Activated T-helper 1 cell treated with anti-CD3 and anti-CD28 coated beads, Interleukin-12 subunit alpha, Interleukin-12 subunit beta, Interleukin-2, Interleukin-4 antibody, amounts not matched to agents 30 ng/mL and 10 ng/mL and 1 ng/mL, durations not matched to agents 14 hours and 24 hours and 36 hours (primary cell): ENCODE measurements at regions of chr5 and their contacts with region 1.

Region 1: DNA sequence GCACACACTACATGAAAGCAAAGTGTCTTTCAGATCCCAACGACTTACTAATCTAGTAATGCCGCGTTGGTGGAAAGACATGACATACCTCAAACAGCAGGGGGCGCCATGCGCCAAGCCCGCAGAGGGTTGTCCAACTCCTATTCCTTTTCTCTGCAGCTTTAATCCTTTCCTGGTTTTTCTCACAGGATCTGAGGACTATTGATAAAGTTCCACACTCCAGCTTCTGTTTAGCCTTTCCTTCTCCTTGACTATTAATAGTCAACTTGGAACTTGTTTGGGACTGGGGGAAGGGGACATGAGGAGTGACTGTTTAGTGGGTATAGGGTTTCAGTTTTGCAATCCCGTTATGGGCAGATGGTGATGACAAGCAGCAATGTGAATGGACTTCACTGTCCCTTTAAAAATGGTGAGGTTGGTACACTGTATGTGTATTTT is 62.9 kb downstream of the OTULIN start:
- DNase-seq: peak; percentile 64
- H3K4me3 Mint-ChIP-seq: no peak overlapping the region
- H3K27ac Mint-ChIP-seq: no peak overlapping the region
- H3K4me1 Mint-ChIP-seq: peaks cover 11% of the 10 kb centered on the region
- H3K27me3 Mint-ChIP-seq: no peaks in the 10 kb centered on the region

Region 2: DNA sequence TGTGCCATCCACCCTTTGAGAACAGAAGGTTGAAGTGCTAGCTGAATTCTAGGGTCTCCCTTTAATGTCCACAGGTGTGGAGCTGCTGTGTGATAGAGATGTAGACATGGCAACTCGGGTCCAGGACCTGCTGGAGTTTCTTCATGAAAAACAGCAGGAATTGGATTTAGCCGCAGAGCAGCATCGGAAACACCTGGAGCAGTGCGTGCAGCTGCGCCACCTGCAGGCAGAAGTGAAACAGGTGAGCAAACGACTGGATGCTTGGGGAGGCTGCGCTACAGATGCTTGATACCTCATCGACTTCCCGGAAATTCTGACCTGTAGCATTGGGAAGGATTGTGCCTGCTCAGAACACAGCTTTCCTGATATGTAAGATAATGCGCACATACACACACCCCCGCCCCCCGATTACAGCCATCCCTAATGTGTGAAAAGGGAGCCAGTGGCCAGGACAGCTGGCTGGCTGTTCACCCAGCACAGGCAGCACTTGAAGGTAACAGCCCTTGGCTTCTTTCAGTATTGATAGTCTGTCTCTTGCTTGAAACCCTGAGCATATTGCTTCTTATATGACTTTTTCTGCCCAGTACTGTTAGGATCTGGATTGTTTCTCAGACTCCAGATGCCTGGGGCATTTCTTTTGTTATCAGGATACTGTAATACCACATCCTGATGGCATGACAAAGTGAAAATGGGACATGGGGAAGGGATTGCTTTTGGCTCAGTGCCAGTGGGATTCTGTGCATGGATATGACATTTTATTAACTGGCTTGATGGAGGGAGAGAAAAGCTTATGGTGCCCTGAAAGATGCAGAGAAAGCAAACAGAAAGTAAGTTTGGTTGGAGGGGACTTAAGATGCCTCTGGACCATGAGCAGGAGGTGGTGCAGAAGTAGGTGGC is 362.6 kb before region 1 on chr5:
- intact Hi-C with region 1: loop called (anchors 5 kb)
- DNase-seq: no peak
- H3K4me3 Mint-ChIP-seq: no peak overlapping the region
- H3K27ac Mint-ChIP-seq: peak overlapping the region; percentile 24
- H3K4me1 Mint-ChIP-seq: peaks cover 54% of the 10 kb centered on the region
- H3K27me3 Mint-ChIP-seq: no peaks in the 10 kb centered on the region

Region 3: DNA sequence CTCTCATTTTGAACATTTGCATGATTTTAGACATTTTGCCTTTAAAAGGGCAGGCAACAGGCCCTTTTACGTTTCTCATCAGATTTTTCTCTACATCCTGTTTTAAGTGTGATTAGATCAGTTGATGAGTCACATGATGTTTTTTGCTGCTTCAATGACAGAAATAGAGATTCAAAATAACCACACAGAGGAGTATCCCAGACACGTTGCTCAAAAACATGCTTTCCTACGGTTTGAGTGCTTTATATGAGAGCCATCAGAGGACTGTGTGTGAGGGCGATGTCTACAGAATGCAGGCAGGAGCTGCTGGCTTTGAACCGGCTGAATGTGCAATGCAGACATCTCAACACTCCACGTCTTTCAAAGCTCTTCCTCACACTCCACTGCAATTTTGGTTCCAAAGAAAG is 20.8 kb before region 1 on chr5:
- intact Hi-C with region 1: loop called (anchors 1 kb)
- DNase-seq: peak; percentile 48
- H3K4me3 Mint-ChIP-seq: peak overlapping the region; percentile 87
- H3K27ac Mint-ChIP-seq: peak overlapping the region; percentile 99
- H3K4me1 Mint-ChIP-seq: peaks cover 75% of the 10 kb centered on the region
- H3K27me3 Mint-ChIP-seq: no peaks in the 10 kb centered on the region

Region 4: GRCh38 chr5:14946815-14947640 is 219.6 kb after region 1 on chr5:
- intact Hi-C with region 1: loop called (anchors 5 kb)
- DNase-seq: peak; percentile 10
- H3K4me3 Mint-ChIP-seq: no peak overlapping the region
- H3K27ac Mint-ChIP-seq: no peak overlapping the region
- H3K4me1 Mint-ChIP-seq: no peaks in the 10 kb centered on the region
- H3K27me3 Mint-ChIP-seq: no peaks in the 10 kb centered on the region

Region 5: DNA sequence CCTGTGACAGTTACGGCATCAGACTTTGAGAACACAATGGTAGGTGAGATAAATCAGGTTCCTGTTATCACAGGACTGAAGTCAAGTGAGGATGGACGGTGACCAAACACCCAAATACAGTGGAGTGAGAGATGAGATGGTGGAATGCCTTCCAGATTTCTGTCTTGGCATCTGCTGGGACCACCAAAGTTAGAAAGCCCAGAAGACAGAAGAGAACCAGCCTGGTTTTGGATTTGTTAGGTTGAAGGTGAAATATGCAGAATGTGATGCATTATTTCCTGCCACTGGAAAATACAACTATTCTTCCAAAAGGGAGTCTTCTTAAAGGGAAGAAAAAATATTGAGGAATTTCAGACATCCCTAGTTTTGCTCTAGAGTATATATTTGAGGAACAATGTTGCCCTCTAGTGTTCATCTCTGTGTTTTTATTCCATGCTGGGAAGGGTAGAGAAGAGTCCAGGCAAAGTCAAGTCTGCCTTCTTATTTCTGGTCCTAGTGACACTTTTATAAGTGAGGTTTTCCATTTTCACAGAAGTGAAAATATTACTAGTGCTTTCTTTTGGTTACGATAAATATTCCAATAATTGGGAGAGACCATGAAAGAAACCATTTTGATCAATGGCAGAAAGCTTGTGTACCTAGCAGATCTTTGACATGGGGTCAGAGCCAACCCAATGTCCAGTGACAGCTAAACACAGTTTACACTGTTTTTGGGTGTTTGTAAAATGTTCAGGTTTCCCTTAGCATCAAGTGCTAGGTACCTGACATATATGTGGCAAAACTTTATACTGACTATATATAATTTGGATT is 286.4 kb after region 1 on chr5:
- intact Hi-C with region 1: loop called (anchors 1 kb)
- DNase-seq: no peak
- H3K4me3 Mint-ChIP-seq: no peak overlapping the region
- H3K27ac Mint-ChIP-seq: no peak overlapping the region
- H3K4me1 Mint-ChIP-seq: no peaks in the 10 kb centered on the region
- H3K27me3 Mint-ChIP-seq: peaks cover 4% of the 10 kb centered on the region